Kidney (tissue), 22 donors: ENCODE measurements at regions of chr10 and their contacts with region 1.

Region 1: DNA sequence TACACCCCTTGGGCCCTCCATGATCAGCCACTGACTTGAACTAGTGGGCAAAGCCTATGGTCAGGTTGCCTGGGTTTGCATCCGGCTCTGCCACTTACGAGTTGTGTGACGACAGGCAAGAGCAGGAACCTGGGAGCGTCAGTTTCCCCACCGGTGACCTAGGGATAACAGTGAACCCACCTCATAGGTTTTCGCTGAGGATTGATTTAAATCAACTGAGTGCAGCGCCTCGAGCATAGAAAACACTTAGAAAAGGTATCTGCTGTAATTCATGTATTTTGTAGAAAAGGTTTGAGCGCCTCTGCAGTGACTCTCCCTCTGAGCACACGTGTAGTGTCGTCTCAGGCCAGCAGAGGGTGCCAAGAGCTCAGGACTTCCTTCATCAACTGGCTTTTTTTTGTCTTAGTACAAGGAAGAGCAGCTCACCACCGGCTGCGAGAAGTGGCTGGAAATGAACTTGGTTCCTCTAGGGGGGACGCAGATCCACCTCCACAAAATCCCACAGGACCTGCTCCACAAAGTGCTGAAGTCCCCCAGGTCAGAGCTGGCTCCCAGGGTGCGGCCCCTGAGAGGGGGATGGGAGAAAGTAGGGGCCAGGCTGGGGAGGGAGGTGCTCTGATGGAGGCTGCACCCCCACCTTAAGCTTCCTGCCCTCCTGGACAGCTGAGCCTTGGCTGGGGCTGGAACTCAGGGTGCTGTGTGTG is 27.7 kb downstream of the BTBD16 start:
- DNase-seq: peak; percentile 78 to 92 (median 83)
- H3K4me3 ChIP-seq: no peak overlapping the region
- H3K27ac ChIP-seq: no peak overlapping the region
- H3K4me1 ChIP-seq: no peaks in the 10 kb centered on the region
- H3K27me3 ChIP-seq: no peaks in the 10 kb centered on the region
- CTCF ChIP-seq: peak; percentile 97

Region 2: DNA sequence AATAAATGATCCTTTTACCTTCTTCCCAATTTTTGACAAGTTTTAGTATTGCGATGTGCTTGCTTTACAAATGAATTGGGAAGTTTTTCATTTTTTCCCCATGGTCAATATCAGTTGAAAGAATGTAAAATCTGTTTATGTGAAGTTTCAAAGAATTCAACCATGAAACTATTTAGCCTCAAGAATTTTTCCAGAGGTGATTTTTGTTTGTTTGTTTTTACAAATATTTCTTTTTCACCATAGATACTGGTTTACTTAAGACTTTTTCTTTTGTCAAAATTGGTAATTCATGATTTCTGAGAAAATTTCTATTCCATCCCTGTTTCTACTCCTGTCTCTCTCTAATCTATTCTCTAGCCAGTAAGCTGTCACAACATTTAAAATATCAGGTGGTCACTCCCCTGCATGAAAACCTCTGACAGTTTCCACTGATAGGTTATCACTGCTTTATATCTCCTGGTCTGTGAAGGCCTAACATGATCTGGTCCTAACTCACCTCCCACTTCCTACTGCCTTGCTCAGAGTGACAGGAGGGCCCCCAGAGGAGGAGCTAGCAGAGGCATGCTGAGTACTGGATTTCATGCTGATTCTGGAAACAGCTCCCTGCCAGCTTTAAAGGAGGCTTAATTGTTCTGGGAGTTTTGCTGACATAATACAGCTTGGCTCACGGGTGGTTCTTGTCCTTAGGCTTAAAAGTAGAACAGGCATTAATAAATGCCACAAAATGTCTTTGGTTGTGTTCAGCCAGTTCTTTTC is 148.1 kb after region 1 on chr10:
- intact Hi-C with region 1: loop called (anchors 10 kb)
- DNase-seq: peak in 1 of 5 donors; percentile 38
- H3K4me3 ChIP-seq: no peak overlapping the region
- H3K27ac ChIP-seq: no peak overlapping the region
- H3K4me1 ChIP-seq: no peaks in the 10 kb centered on the region
- H3K27me3 ChIP-seq: no peaks in the 10 kb centered on the region
- CTCF ChIP-seq: no peak

Region 3: GRCh38 chr10:122565728-122566206 is 267.0 kb after region 1 on chr10:
- intact Hi-C with region 1: loop called (anchors 5 kb)
- DNase-seq: peak; percentile 69 to 94 (median 81)
- H3K4me3 ChIP-seq: peak overlapping the region in 2 of 3 donors; percentile 16 to 44
- H3K27ac ChIP-seq: no peak overlapping the region
- H3K4me1 ChIP-seq: peaks cover 0 to 4% (median 0%) of the 10 kb centered on the region in 3 donors
- H3K27me3 ChIP-seq: no peaks in the 10 kb centered on the region
- CTCF ChIP-seq: peak; percentile 83